Activated T-helper 2 cell treated with anti-CD3 and anti-CD28 coated beads, Interferon-gamma antibody, Interleukin-2, Interleukin-4, amounts not matched to agents 10 μg/mL and 5 μg/mL and 100 μg/mL, durations not matched to agents 14 hours and 24 hours and 36 hours (primary cell): ENCODE measurements at regions of chr2 and their contacts with region 1.

Region 1: GRCh38 chr2:181573140-181573736 is 83.7 kb downstream of the CERKL start:
- DNase-seq: no peak
- H3K4me3 Mint-ChIP-seq: no peak overlapping the region
- H3K27ac Mint-ChIP-seq: no peak overlapping the region
- H3K4me1 Mint-ChIP-seq: peaks cover 3% of the 10 kb centered on the region
- H3K27me3 Mint-ChIP-seq: peaks cover 26% of the 10 kb centered on the region

Region 2: DNA sequence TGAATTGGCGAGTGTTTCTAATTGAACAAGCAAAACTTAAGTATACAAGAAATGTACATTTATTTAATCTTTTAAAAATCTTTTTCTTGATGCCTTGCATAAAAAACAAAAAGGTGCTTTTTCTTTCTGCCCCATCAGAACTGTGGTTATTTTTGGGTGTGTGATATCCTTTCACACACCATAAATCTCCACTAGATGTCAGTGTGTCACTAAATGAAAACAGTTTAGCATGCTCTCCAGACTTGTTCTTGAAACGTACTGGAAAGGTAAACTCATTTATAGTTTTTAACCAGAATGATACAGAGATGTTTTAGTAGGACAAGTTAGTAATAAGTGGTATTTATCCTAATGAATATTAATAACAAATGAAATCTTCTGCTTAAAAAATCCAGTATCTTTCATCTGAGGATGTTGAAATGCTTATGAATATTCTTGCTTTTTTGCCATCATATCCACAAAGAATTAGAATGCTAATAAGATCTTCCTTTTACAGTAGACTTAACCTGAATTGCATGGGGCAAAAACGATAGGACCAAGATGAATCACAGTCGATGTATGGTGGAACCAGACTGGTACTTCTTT is 496.0 kb before region 1 on chr2:
- intact Hi-C with region 1: loop called (anchors 10 kb)
- DNase-seq: peak; percentile 10
- H3K4me3 Mint-ChIP-seq: no peak overlapping the region
- H3K27ac Mint-ChIP-seq: no peak overlapping the region
- H3K4me1 Mint-ChIP-seq: peaks cover 5% of the 10 kb centered on the region
- H3K27me3 Mint-ChIP-seq: no peaks in the 10 kb centered on the region

Region 3: DNA sequence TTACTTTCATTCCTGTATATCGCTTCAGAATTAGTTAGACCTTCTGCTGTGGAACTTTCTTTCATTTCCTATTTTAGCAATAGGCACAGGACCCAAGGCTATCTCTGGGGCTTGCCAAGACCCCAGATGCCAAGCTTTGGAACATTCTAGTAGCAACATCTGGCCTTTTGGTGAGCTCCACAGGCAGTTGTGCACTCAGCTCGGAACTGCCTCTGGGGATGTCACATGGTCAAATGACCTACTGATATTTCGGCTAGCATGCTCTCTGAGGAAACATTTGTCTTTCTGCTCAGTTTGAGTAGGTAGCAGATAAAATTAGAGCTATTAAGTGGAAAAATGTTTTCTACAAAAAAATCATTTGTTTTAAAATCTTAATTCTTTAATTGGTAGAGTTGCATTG is 192.7 kb before region 1 on chr2:
- intact Hi-C with region 1: no loop called
- DNase-seq: no peak
- H3K4me3 Mint-ChIP-seq: no peak overlapping the region
- H3K27ac Mint-ChIP-seq: no peak overlapping the region
- H3K4me1 Mint-ChIP-seq: peaks cover 2% of the 10 kb centered on the region
- H3K27me3 Mint-ChIP-seq: no peaks in the 10 kb centered on the region

Region 4: GRCh38 chr2:181552808-181553207 is 20.4 kb before region 1 on chr2:
- intact Hi-C with region 1: no loop called
- DNase-seq: no peak
- H3K4me3 Mint-ChIP-seq: no peak overlapping the region
- H3K27ac Mint-ChIP-seq: no peak overlapping the region
- H3K4me1 Mint-ChIP-seq: no peaks in the 10 kb centered on the region
- H3K27me3 Mint-ChIP-seq: no peaks in the 10 kb centered on the region